PC-3 (cell line): ENCODE measurements at regions of chr22 and their contacts with region 1.

Region 1: GRCh38 chr22:27420817-27421361 is 380.7 kb downstream of the MN1 start:
- DNase-seq: peak; percentile 73
- ATAC-seq: peak; percentile 73
- H3K4me3 ChIP-seq: no peak overlapping the region
- H3K27ac ChIP-seq: no peak overlapping the region
- H3K4me1 ChIP-seq: peaks cover 14% of the 10 kb centered on the region
- H3K27me3 ChIP-seq: no peaks in the 10 kb centered on the region
- CTCF ChIP-seq: no peak

Region 2: DNA sequence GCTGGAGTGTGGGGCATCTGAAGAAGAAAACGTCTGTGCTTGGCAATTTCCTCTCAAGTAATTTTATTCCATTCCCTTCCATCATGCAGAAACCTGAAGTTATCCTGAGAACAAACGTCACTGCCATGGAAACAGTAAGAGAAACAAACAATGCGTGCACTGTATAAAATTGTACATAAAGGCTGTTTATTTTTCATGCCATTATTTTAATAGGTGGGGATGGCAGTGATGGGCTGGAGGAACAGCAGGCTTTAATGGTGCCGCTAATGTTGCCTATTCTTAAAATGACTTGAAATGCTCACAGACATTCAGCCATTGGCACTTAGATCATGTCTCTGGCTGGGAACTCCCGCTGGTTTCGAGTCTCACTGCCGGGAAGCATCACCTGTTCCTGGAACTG is 1259.1 kb before region 1 on chr22:
- CTCF ChIA-PET with region 1: no interaction called
- POLR2A ChIA-PET with region 1: no interaction called
- intact Hi-C with region 1: no loop called
- DNase-seq: no peak
- ATAC-seq: no peak
- H3K4me3 ChIP-seq: no peak overlapping the region
- H3K27ac ChIP-seq: no peak overlapping the region
- H3K4me1 ChIP-seq: no peaks in the 10 kb centered on the region
- H3K27me3 ChIP-seq: no peaks in the 10 kb centered on the region
- CTCF ChIP-seq: no peak

Region 3: DNA sequence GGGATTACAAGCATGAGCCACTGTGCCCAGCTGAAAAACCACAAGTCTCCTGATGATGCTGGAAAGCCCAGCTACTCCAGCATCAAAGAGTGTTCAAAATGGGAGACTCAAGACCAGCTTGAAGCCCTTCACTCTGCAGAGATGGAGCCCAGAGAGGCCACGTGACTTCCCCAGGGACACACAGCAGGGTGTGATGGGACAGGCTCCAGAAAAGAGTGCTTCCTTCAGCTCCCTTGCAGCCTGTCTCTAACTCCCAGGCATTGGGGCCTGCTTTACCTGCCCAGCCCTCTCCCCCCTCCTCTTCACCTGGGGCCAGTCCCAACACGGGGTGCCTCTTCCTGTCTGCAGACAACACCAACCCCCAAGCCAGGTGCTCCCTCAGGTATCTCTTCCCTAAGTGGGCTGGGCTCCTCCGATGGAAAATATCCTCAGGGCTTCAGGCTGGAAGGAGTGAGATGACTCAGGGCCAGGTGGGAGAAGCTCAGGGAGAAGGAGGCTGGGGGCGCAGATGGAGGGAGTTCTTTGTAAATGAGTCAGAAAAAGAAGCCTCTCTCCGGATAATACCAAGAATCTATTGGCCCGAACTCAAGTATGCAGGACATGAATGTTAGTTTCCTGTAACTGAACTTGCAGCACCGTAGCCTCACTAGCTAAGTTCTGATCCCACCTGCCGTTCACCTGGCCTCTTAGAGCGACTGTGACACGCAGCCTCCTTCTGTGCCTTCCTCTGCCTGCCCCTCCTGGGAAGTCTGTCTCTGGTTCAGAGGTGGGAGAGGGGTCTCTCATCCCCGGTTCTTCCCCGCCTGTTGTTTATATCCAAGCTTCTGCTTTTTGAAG is 54.0 kb after region 1 on chr22:
- CTCF ChIA-PET with region 1: no interaction called
- POLR2A ChIA-PET with region 1: no interaction called
- intact Hi-C with region 1: loop called (anchors 5 kb)
- DNase-seq: peak; percentile 97
- ATAC-seq: peak; percentile 61
- H3K4me3 ChIP-seq: 0 out of 2 replicates have a peak overlapping the region, but pooled peaks have one; percentile 18
- H3K27ac ChIP-seq: peak overlapping the region; percentile 99
- H3K4me1 ChIP-seq: peaks cover 48% of the 10 kb centered on the region
- H3K27me3 ChIP-seq: no peaks in the 10 kb centered on the region
- CTCF ChIP-seq: no peak